Activated T-helper 2 cell treated with anti-CD3 and anti-CD28 coated beads, Interferon-gamma antibody, Interleukin-2, Interleukin-4, amounts not matched to agents 10 μg/mL and 5 μg/mL and 100 μg/mL, durations not matched to agents 14 hours and 24 hours and 36 hours (primary cell): ENCODE measurements at regions of chr5 and their contacts with region 1.

Region 1: GRCh38 chr5:65742565-65743231 is 20.7 kb downstream of the NLN start:
- DNase-seq: no peak
- H3K4me3 Mint-ChIP-seq: no peak overlapping the region
- H3K27ac Mint-ChIP-seq: no peak overlapping the region
- H3K4me1 Mint-ChIP-seq: peaks cover 12% of the 10 kb centered on the region
- H3K27me3 Mint-ChIP-seq: no peaks in the 10 kb centered on the region

Region 2: DNA sequence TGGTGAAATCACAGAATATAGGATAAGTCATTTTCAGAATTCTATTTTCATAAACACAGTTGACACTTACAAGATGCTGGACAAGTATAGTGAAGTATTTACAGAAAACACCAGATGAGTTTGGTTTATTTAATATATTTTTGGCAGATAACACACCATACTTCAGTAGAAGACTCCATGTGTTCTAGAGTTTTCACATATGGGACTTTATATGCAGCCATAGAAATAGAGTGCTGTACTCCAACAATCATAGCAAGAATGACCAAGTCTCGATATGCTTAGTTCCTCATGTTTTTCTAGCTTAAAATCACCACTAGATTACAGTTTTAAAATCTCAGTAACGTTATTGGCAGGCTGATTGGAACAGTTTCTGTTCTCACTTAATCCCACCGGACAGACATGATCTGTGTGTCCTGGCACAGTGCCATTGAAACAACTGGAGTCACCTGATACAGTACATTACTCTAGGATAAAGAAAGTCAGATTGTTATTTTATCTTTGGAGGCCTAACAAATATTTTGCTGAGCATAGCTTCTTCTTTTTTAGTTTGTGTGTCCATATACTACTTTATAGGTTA is 137.9 kb after region 1 on chr5:
- intact Hi-C with region 1: no loop called
- DNase-seq: no peak
- H3K4me3 Mint-ChIP-seq: no peak overlapping the region
- H3K27ac Mint-ChIP-seq: no peak overlapping the region
- H3K4me1 Mint-ChIP-seq: peaks cover 2% of the 10 kb centered on the region
- H3K27me3 Mint-ChIP-seq: no peaks in the 10 kb centered on the region

Region 3: GRCh38 chr5:65952259-65952658 is 209.6 kb after region 1 on chr5:
- intact Hi-C with region 1: no loop called
- DNase-seq: no peak
- H3K4me3 Mint-ChIP-seq: no peak overlapping the region
- H3K27ac Mint-ChIP-seq: no peak overlapping the region
- H3K4me1 Mint-ChIP-seq: peaks cover 4% of the 10 kb centered on the region
- H3K27me3 Mint-ChIP-seq: no peaks in the 10 kb centered on the region

Region 4: DNA sequence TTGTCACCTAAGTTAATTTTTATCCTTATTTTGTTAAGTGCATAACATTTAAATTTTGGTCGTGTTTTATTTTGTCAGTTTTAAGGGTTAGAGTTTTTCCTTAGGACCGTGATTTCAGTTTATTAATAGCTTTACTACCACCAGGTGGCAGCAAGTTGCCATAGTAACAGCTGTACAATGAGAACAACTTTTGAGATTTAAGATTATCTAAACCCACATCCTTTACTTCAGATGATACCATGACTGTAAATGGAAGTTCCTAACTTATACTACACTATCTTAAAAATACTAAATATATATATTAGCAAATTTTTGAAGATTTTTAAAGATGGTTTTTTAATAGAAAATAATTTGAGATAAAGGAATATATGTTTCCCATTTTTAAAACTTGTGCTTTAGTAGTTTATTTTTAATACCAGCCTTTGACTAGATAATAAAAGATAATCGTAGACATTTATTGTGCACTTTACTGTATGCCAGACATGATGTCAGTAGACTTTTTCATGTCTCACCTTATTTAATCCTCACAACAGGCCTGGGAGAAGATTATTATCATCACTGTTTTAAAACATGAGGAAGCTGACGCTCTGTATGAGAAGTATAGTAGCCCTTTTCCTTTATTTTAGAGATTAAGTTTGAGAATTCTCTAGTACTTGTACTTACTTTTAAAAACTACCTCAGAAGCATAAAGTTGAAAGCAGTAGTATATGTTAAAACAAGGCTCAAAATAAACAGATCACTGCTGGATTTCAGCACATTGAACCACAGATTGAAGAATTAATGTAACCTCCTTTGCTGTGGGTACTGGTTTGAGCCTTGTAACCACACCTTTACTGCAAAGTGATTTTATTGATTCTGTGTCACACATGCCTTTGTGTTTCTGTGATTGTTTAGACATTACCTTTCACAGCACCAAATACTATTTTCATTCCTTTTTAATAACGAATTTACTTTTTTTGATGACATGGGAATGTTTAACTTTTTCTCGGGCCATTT is 428.9 kb after region 1 on chr5:
- intact Hi-C with region 1: loop called (anchors 5 kb)
- DNase-seq: peak; percentile 29
- H3K4me3 Mint-ChIP-seq: no peak overlapping the region
- H3K27ac Mint-ChIP-seq: peak overlapping the region; percentile 28
- H3K4me1 Mint-ChIP-seq: peaks cover 28% of the 10 kb centered on the region
- H3K27me3 Mint-ChIP-seq: no peaks in the 10 kb centered on the region